Activated CD8-positive, alpha-beta T cell treated with anti-CD3 and anti-CD28 coated beads for 36 hours (primary cell): ENCODE measurements at regions of chr6 and their contacts with region 1.

Region 1: GRCh38 chr6:142885182-142885867 is 59.7 kb downstream of the HIVEP2 start:
- DNase-seq: peak; percentile 58
- ATAC-seq: peak; percentile 81
- H3K4me3 Mint-ChIP-seq: peak overlapping the region; percentile 90
- H3K27ac Mint-ChIP-seq: peak overlapping the region; percentile 100
- H3K4me1 Mint-ChIP-seq: peaks cover 85% of the 10 kb centered on the region
- H3K27me3 Mint-ChIP-seq: no peaks in the 10 kb centered on the region
- CTCF ChIP-seq: no peak

Region 2: DNA sequence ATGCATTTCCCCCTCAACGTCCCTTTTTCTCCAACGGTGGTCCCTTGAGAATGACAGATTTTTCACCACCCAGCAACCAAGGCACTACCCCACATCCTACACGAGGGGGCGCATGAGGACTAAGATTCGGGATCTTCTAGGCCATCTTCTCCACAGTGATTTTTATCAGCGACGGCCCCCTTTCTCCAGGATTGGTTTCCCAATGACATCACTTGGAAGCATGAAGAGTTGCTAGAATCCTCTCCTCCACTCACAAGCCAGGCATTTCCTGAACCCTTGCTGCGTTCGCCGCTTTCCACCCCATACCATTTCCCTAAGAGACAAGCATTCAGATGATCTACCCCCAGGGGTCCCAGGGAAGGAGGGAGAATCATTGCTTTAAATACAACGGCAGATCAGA is 192.4 kb before region 1 on chr6:
- CTCF ChIA-PET with region 1: interaction called, 11 read pairs
- POLR2A ChIA-PET with region 1: no interaction called
- intact Hi-C with region 1: no loop called
- DNase-seq: peak; percentile 73
- ATAC-seq: peak; percentile 84
- H3K4me3 Mint-ChIP-seq: no peak overlapping the region
- H3K27ac Mint-ChIP-seq: no peak overlapping the region
- H3K4me1 Mint-ChIP-seq: peaks cover 24% of the 10 kb centered on the region
- H3K27me3 Mint-ChIP-seq: no peaks in the 10 kb centered on the region
- CTCF ChIP-seq: peak; percentile 82

Region 3: GRCh38 chr6:142827991-142828390 is 57.3 kb before region 1 on chr6:
- CTCF ChIA-PET with region 1: no interaction called
- POLR2A ChIA-PET with region 1: no interaction called
- intact Hi-C with region 1: no loop called
- DNase-seq: no peak
- ATAC-seq: no peak
- H3K4me3 Mint-ChIP-seq: no peak overlapping the region
- H3K27ac Mint-ChIP-seq: peak overlapping the region; percentile 48
- H3K4me1 Mint-ChIP-seq: peaks cover 81% of the 10 kb centered on the region
- H3K27me3 Mint-ChIP-seq: no peaks in the 10 kb centered on the region
- CTCF ChIP-seq: no peak

Region 4: DNA sequence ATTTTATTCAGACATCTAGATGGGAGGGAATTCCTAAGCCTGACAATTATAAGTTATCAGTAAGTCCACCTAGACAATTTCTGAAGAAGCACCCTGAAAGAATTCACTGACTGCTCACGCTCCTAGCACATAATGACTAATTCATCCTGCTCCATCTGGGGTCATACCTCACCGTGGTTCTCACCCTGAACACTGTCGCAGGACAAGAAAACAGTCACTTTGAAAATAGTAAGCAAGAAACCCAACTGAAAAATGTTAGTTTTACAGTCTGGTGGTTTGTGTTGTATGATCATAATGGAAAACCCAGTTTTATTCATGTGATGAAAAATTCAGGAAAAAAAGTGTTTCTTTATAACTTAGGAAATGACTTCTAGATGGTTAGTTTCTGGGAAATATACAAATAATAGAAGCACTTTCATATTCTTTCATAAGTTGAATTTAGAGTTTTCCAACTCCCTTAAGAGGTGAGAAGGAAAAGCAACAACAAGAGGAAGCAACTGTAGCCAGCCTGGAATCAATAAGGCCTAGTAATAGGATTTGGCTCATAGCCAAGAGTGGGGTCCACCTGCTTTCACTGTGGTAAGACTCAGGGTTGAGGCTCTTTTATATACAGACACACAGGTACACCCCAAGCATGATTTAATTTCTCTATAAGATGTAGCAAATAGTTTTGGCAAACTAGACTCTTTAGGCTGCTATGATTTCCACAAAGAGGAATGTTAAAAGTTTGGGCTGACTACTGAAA is 34.5 kb before region 1 on chr6:
- CTCF ChIA-PET with region 1: interaction called, 9 read pairs
- POLR2A ChIA-PET with region 1: interaction called, 15 read pairs
- intact Hi-C with region 1: loop called (anchors 2 kb)
- DNase-seq: peak; percentile 68
- ATAC-seq: peak; percentile 64
- H3K4me3 Mint-ChIP-seq: peak overlapping the region; percentile 40
- H3K27ac Mint-ChIP-seq: peak overlapping the region; percentile 93
- H3K4me1 Mint-ChIP-seq: peaks cover 97% of the 10 kb centered on the region
- H3K27me3 Mint-ChIP-seq: no peaks in the 10 kb centered on the region
- CTCF ChIP-seq: no peak

Region 5: GRCh38 chr6:142871910-142872331 is 13.4 kb before region 1 on chr6:
- CTCF ChIA-PET with region 1: interaction called, 18 read pairs
- POLR2A ChIA-PET with region 1: interaction called, 6 read pairs
- intact Hi-C with region 1: no loop called
- DNase-seq: peak; percentile 79
- ATAC-seq: peak; percentile 91
- H3K4me3 Mint-ChIP-seq: peak overlapping the region; percentile 43
- H3K27ac Mint-ChIP-seq: peak overlapping the region; percentile 75
- H3K4me1 Mint-ChIP-seq: peaks cover 87% of the 10 kb centered on the region
- H3K27me3 Mint-ChIP-seq: no peaks in the 10 kb centered on the region
- CTCF ChIP-seq: no peak

Region 6: DNA sequence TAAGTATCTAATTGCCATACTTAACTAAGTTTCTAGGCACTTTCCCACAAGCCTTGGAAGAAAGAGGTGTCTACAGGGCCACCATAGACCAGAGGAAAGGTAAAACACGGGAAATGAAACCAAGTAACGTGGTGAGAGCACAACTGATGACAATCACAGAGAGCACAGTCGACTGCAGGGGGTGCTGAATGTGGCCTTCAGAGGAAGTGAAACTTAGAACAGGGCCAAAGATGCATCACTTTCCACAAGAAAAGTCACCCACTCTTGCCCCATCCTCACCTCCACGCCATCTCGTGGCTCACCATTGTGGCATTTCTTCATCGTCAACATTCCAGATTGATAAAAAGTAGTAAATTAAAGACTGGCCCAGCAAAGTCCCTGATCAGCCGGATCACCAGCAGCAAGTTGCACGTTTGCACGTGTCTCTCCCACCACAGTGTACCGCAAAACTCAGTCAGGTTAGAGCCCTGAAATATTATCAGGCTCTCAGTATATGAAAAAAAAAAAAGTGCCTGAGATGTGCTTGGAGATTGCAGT is 28.3 kb after region 1 on chr6:
- CTCF ChIA-PET with region 1: no interaction called
- POLR2A ChIA-PET with region 1: interaction called, 11 read pairs
- intact Hi-C with region 1: no loop called
- DNase-seq: peak; percentile 88
- ATAC-seq: peak; percentile 88
- H3K4me3 Mint-ChIP-seq: peak overlapping the region; percentile 70
- H3K27ac Mint-ChIP-seq: peak overlapping the region; percentile 98
- H3K4me1 Mint-ChIP-seq: peaks cover 82% of the 10 kb centered on the region
- H3K27me3 Mint-ChIP-seq: no peaks in the 10 kb centered on the region
- CTCF ChIP-seq: no peak